ENCODE measurements at regions of chr18 and their contacts with region 1.

Region 1: DNA sequence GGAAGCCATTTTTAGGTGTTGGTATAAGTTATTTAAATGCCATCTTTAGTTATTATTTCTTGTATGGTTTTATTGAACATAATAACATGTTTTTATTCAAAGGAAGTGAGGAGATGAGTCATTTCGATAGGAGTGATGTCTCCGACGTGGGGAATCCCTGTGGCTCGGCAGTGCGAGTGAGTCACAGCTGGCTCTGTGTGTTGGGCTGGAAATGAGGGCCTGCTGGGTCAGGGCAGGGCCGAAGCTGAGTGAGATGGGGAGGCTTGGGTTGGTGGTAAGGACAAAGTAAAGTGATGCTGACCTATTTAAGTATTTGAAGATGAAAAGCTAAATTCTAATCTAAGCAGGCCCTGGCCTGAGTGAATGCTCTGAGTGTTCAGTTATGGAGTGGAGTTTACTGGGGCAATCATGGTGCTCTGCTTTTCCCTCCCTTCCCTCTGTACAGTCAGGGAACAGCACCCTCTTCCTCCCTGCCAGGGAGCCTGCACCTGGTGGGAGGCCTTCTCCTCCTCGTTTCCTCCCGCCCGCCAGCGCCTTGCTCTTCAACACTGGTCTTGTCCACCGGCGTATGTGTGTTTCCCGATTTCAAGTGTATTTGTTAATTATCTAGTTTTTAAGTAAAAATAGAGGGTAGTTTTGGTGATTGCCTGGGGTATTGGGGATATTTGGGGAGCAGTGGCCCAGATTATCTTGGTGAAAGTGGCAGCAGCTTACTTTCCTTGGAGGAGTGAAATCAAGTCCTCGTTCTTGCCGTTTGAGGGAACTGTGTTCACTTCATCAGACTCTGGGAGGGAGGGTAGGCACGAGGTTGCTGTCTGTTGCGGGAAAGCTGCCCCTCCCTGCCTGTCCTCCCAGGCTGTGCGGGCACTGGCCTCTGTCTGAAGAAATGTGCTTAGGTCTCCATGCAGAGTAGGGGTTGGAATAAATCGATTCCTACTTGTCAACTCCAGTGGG is 157.0 kb downstream of the LDLRAD4 start:
- DNase-seq: peak; percentile 63 to 82 (median 75)
- ATAC-seq: peak in 3 of 4 donors; percentile 74 to 83 (median 83)
- H3K4me3 ChIP-seq: no peak overlapping the region
- H3K27ac ChIP-seq: peak overlapping the region in 11 of 12 donors; percentile 11 to 80 (median 65)
- H3K4me1 ChIP-seq: peaks cover 0 to 66% (median 49%) of the 10 kb centered on the region in 12 donors
- H3K27me3 ChIP-seq: no peaks in the 10 kb centered on the region
- CTCF ChIP-seq: peak in 2 of 12 donors; percentile 4 to 23
- POLR2A ChIP-seq: no peak

Region 2: DNA sequence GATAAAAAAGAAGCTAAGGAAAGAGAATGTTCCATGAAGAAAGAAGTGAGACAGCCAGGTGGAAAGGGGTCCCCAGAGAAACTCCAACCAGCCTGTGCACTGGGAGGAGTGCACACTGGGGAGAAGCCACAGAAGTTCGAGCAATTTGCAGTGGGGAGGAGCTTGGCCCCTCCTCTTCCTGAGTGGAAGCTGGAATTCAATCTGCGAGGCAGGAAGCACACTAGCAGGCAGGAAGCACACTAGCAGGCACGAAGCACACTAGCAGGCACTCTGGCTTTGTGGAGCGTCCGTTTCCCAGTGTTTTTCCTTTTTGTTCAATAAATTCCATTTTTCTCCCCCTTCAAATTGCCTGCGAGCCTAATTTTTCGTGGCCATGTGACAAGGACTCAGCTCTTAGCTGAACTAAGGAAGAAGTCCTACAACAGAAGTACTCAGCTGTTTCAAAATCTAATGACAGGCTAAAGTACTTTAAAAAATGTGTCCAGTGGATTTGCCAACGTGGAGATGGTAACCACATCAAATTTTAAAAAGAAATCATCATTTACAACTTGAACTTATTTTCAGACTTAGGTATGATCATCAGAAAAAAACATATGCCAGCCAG is 696.3 kb before region 1 on chr18:
- intact Hi-C with region 1: no loop called
- DNase-seq: peak; percentile 71 to 84 (median 79)
- ATAC-seq: peak; percentile 82 to 98 (median 98)
- H3K4me3 ChIP-seq: peak overlapping the region in 8 of 12 donors; percentile 5 to 44 (median 34)
- H3K27ac ChIP-seq: peak overlapping the region; percentile 34 to 90 (median 80)
- H3K4me1 ChIP-seq: peaks cover 0 to 14% (median 8%) of the 10 kb centered on the region in 12 donors
- H3K27me3 ChIP-seq: no peaks in the 10 kb centered on the region
- CTCF ChIP-seq: no peak
- POLR2A ChIP-seq: peak in 1 of 2 donors; percentile 77

Region 3: DNA sequence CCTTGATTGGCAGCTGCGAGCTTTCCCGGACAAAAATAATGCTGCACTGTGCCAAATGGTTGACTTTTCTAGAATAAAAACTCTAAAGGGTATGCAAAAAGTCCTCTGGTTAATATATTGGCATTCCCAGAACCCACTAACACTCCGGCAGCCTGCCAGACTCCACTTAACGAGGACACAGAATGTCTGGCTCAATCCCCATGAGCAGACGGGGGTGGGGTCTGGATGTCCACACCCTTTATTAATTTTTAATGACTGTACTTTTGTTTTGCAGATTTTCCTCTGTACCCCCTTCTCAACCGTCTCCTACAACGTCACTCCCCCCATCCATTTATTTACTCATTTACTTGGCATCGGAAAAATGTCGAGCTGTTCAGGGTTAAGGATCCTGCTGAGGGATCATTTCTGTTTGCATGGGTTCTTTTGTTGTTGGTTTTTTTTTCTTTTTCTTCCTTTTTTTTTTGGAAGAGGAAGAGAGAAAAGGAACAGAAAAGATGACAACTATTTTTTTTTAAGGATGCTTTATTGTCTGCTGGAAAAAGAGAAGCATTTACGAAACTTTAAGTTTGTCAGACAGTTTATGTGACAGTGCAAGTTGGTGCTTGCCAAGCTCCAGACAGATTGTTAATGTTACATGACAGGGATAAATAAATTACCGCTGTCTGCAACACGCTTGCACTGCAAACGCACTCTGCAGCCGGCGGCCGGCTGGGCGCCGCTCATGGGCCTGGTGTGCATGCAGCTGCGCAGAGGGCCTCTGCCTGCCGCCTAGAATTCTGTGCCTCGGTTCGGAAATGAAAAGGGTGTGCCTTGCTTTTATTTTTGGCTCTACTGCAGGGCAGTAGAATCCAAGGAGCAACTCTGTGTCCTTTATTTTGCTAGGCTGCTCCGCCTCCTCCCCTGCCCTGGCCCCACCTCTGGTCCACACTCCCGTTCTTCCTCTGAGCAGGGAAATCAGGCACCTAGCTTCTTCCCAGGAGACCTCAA is 153.4 kb before region 1 on chr18:
- intact Hi-C with region 1: loop called in 9 of 10 experiments (anchors 1 to 5 kb)
- DNase-seq: peak; percentile 77 to 90 (median 84)
- ATAC-seq: peak; percentile 33 to 68 (median 59)
- H3K4me3 ChIP-seq: peak overlapping the region in 10 of 12 donors; percentile 15 to 38 (median 20)
- H3K27ac ChIP-seq: peak overlapping the region; percentile 70 to 95 (median 91)
- H3K4me1 ChIP-seq: peaks cover 14 to 69% (median 58%) of the 10 kb centered on the region in 12 donors
- H3K27me3 ChIP-seq: no peaks in the 10 kb centered on the region
- CTCF ChIP-seq: no peak
- POLR2A ChIP-seq: no peak

Region 4: GRCh38 chr18:13268158-13269012 is 107.2 kb before region 1 on chr18:
- intact Hi-C with region 1: loop called in 1 of 10 experiments (anchors 10 kb)
- DNase-seq: peak in 3 of 5 donors; percentile 21 to 55 (median 45)
- ATAC-seq: no peak
- H3K4me3 ChIP-seq: peak overlapping the region in 1 of 12 donors; percentile 10
- H3K27ac ChIP-seq: peak overlapping the region; percentile 6 to 86 (median 72)
- H3K4me1 ChIP-seq: peaks cover 8 to 100% (median 82%) of the 10 kb centered on the region in 12 donors
- H3K27me3 ChIP-seq: no peaks in the 10 kb centered on the region
- CTCF ChIP-seq: no peak
- POLR2A ChIP-seq: no peak

Region 5: GRCh38 chr18:13279181-13280069 is 96.2 kb before region 1 on chr18:
- intact Hi-C with region 1: loop called in 1 of 10 experiments (anchors 10 kb)
- DNase-seq: no peak
- ATAC-seq: no peak
- H3K4me3 ChIP-seq: no peak overlapping the region
- H3K27ac ChIP-seq: peak overlapping the region in 6 of 12 donors; percentile 9 to 57 (median 27)
- H3K4me1 ChIP-seq: peaks cover 0 to 51% (median 30%) of the 10 kb centered on the region in 12 donors
- H3K27me3 ChIP-seq: no peaks in the 10 kb centered on the region
- CTCF ChIP-seq: no peak
- POLR2A ChIP-seq: no peak

Region 6: GRCh38 chr18:13302457-13303225 is 72.9 kb before region 1 on chr18:
- intact Hi-C with region 1: loop called in 1 of 10 experiments (anchors 5 kb)
- DNase-seq: no peak
- ATAC-seq: no peak
- H3K4me3 ChIP-seq: no peak overlapping the region
- H3K27ac ChIP-seq: no peak overlapping the region
- H3K4me1 ChIP-seq: peaks cover 3 to 57% (median 37%) of the 10 kb centered on the region in 12 donors
- H3K27me3 ChIP-seq: no peaks in the 10 kb centered on the region
- CTCF ChIP-seq: no peak
- POLR2A ChIP-seq: no peak

Region 7: DNA sequence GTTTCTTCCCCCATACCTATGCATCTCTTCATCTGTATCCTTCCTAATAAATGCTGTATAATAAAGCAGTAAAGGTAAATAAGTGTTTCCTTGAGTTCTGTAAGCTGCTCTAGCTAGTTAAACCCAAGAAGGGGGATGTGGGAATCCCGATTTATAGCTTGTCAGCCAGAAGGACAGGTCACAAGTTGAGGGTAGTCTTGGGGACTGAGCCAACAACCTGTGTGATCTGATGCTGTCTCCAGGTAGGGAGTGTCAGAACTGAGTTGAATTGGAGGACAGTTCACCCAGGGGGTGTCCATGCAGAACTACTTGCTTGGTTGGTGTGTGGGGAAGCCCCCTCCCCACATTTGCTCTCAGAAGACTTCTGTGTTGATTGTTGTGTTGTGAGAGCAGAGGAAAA is 44.6 kb before region 1 on chr18:
- intact Hi-C with region 1: loop called in 1 of 10 experiments (anchors 5 kb)
- DNase-seq: no peak
- ATAC-seq: no peak
- H3K4me3 ChIP-seq: no peak overlapping the region
- H3K27ac ChIP-seq: no peak overlapping the region
- H3K4me1 ChIP-seq: peaks cover 0 to 4% (median 0%) of the 10 kb centered on the region in 12 donors
- H3K27me3 ChIP-seq: no peaks in the 10 kb centered on the region
- CTCF ChIP-seq: no peak
- POLR2A ChIP-seq: no peak

Region 8: DNA sequence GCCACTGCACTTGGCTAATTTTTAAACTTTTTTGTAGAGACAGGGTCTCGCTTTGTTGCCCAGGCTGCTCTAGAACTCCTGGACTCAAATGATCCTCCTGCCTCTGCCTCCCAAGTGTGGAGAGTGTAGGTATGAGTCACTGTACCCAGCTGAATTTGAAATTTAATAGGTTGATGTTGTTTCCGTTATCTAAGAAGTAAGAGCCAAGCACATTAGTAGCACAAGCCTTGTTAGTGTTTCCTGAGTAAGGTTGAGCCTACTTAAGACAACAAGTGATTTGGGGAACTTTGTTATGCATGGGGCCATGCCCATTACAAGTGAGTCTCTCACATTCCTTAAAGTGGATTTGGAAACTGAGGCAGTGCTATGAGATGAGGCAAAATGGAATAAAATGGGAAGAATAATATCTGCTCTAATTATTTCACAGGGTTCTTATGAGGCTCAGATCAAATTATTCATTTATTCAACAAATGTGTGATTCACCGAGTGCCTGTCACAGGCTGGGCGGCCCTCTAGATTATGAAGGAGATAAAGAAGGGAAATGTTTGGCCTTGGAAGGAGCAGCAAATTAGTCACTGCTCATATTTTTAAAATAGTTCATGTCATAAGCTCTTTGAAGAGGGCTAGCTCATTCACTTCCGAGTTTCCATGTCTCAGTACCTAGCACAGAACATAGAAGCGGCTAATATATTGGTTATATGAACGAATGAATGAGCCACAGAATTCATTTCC is 60.2 kb after region 1 on chr18:
- intact Hi-C with region 1: no loop called
- DNase-seq: no peak
- ATAC-seq: peak; percentile 35 to 76 (median 64)
- H3K4me3 ChIP-seq: no peak overlapping the region
- H3K27ac ChIP-seq: peak overlapping the region in 8 of 12 donors; percentile 23 to 61 (median 41)
- H3K4me1 ChIP-seq: peaks cover 0 to 45% (median 25%) of the 10 kb centered on the region in 12 donors
- H3K27me3 ChIP-seq: no peaks in the 10 kb centered on the region
- CTCF ChIP-seq: no peak
- POLR2A ChIP-seq: no peak